Activated T-helper 1 cell treated with anti-CD3 and anti-CD28 coated beads, Interleukin-12 subunit alpha, Interleukin-12 subunit beta, Interleukin-2, Interleukin-4 antibody, amounts not matched to agents 30 ng/mL and 10 ng/mL and 1 ng/mL, durations not matched to agents 14 hours and 24 hours and 36 hours (primary cell): ENCODE measurements at regions of chr18 and their contacts with region 1.

Region 1: GRCh38 chr18:35616664-35617423 is 35.3 kb downstream of the GALNT1 start:
- DNase-seq: peak; percentile 45
- H3K4me3 Mint-ChIP-seq: no peak overlapping the region
- H3K27ac Mint-ChIP-seq: no peak overlapping the region
- H3K4me1 Mint-ChIP-seq: peaks cover 19% of the 10 kb centered on the region
- H3K27me3 Mint-ChIP-seq: no peaks in the 10 kb centered on the region

Region 2: DNA sequence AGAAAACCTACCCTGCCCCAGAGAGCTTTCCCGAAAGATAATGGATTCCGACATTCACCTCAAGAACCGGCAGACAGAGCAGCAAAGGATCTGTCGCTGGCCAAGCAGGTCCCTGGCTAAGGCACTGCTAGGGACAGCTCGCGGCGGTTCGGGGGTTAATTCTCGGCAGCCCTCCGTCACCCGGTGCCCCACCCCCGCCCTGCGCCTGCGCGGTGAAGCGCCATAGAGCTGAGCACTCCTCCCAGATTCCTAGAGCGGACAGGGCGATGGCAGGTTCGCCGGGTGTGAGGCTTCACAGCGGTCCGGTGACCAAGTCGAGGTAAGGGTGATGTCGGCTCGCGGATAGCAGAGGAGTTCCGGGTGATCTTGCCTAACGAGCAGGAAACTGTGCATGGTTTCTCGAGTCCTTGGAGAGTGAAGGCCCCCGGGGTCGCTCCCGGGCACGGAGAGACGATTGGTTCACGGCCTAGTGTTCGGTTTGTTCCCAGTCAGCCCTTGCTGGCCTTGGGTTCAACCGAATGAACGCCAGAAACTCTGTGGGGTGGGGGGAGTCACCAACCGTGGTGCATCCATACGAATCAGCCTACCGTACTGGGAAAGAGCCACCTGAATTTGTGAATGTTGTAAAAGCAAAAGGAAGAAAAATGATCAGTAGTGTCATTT is 326.6 kb before region 1 on chr18 and contains the start of gene ZSCAN30:
- intact Hi-C with region 1: loop called (anchors 2 kb)
- DNase-seq: peak; percentile 94
- H3K4me3 Mint-ChIP-seq: peak within 1 kb of the TSS; percentile 100
- H3K27ac Mint-ChIP-seq: peak within 1 kb of the TSS; percentile 99
- H3K4me1 Mint-ChIP-seq: peaks cover 49% of the 10 kb centered on the region
- H3K27me3 Mint-ChIP-seq: no peaks in the 10 kb centered on the region
- total RNA-seq, gene ZSCAN30: 10.2 and 11.0 TPM in 2 replicates

Region 3: GRCh38 chr18:35478520-35479435 is 138.1 kb before region 1 on chr18:
- intact Hi-C with region 1: loop called (anchors 1 kb)
- DNase-seq: no peak
- H3K4me3 Mint-ChIP-seq: no peak overlapping the region
- H3K27ac Mint-ChIP-seq: peak overlapping the region; percentile 82
- H3K4me1 Mint-ChIP-seq: peaks cover 11% of the 10 kb centered on the region
- H3K27me3 Mint-ChIP-seq: no peaks in the 10 kb centered on the region

Region 4: DNA sequence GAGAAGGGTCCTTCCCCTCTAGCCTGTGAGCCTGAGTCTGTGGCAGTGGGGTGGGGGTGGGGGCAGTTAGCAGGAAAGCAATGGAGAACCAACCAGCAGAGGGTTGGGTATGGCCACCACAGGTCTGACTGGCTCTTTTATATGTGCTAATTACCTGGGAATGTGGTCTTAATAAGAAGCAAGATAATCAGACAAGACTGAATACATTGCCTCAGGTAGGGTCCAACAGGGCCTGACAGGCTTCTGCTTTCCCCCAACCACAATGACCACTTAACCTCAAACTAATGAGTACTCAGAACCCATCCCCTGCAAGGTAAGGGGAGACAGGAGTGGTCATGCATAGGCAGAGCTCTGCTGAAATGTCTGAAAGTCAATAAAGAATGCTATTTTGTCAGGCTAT is 74.5 kb before region 1 on chr18:
- intact Hi-C with region 1: no loop called
- DNase-seq: no peak
- H3K4me3 Mint-ChIP-seq: no peak overlapping the region
- H3K27ac Mint-ChIP-seq: no peak overlapping the region
- H3K4me1 Mint-ChIP-seq: no peaks in the 10 kb centered on the region
- H3K27me3 Mint-ChIP-seq: peaks cover 5% of the 10 kb centered on the region

Region 5: GRCh38 chr18:35580701-35581539 is 35.9 kb before region 1 on chr18:
- intact Hi-C with region 1: loop called (anchors 2 kb)
- DNase-seq: peak; percentile 44
- H3K4me3 Mint-ChIP-seq: peak overlapping the region; percentile 76
- H3K27ac Mint-ChIP-seq: no peak overlapping the region
- H3K4me1 Mint-ChIP-seq: peaks cover 33% of the 10 kb centered on the region
- H3K27me3 Mint-ChIP-seq: peaks cover 3% of the 10 kb centered on the region

Region 6: GRCh38 chr18:35661483-35662146 is 44.8 kb after region 1 on chr18:
- intact Hi-C with region 1: no loop called
- DNase-seq: no peak
- H3K4me3 Mint-ChIP-seq: no peak overlapping the region
- H3K27ac Mint-ChIP-seq: no peak overlapping the region
- H3K4me1 Mint-ChIP-seq: no peaks in the 10 kb centered on the region
- H3K27me3 Mint-ChIP-seq: no peaks in the 10 kb centered on the region

Region 7: DNA sequence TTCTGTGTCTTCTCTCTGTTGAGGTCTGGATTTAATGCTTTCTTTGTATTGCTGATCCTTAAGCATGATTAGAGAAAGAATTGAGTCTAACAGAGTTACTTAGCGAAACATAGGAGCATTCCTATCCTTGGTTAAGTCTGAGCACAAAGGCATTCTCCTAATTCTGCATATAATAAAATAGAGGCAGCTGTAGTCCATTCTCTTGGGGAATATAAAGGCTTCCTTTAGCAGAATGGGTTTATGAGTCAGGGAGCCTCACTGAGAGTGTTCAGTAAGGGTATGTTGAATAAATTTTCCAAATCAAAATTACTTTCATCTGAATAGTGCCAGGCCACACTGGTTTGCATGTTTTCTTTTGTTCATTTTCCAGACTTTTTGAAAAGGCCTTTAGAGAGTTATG is 66.2 kb after region 1 on chr18:
- intact Hi-C with region 1: no loop called
- DNase-seq: no peak
- H3K4me3 Mint-ChIP-seq: no peak overlapping the region
- H3K27ac Mint-ChIP-seq: no peak overlapping the region
- H3K4me1 Mint-ChIP-seq: no peaks in the 10 kb centered on the region
- H3K27me3 Mint-ChIP-seq: no peaks in the 10 kb centered on the region

Region 8: DNA sequence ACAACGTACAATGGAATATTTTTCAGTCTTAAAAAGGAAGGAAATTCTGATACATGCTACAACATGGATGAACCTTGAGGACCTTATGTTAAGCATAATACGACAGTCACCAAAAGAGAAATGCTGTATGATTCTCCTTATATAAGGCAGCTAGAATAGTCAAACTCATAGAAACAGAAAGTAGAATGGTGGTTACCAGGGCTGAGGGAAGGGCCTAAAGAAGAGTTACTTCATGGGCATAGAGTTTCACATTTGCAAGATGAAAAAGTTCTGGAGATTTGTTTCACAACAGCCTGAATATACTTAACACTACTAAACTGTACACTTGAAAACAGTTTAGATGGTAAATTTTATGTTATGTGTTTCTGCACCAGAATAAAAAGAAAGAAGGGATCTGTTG is 78.0 kb after region 1 on chr18:
- intact Hi-C with region 1: loop called (anchors 2 kb)
- DNase-seq: no peak
- H3K4me3 Mint-ChIP-seq: no peak overlapping the region
- H3K27ac Mint-ChIP-seq: no peak overlapping the region
- H3K4me1 Mint-ChIP-seq: no peaks in the 10 kb centered on the region
- H3K27me3 Mint-ChIP-seq: no peaks in the 10 kb centered on the region